Body of pancreas (tissue), 4 donors: ENCODE measurements at regions of chr21 and their contacts with region 1.

Region 1: DNA sequence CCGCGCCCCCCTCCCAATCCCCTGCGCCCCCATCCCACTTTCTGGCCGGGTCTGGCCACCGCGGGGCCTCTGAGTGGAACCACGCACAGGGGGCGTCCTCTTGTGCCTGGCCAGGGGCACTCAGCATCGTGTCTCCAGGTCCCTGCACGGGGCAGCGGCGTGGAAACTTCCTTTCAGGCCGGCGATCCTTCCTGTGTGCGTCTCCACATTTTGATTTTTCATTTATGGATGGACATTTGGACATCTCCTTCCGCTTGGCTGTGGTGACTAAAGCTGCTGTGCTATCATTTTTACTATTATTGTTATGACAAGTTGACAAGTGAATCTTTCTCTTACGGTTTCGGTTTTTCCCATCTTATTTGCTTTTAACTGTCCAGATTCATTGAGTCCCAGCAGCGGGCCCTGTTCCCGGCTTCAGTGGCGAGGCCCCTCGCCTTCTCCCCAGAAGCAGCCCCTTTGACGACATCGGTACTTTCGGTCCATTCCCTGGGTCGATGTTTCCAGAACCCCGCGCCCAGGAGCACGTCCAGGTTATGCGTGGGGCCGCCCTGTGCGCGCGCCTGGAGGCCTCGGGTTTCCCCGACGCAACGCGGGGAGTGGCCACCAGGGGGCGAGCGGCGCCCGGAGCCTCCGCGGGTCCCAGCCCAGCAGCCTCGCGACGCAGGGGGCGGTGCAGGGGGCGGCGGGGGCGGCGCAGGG is 12.4 kb upstream of the SLC19A1 start:
- DNase-seq: peak; percentile 76 to 88 (median 82)
- ATAC-seq: peak; percentile 73
- H3K4me3 ChIP-seq: peak overlapping the region; percentile 20 to 36
- H3K27ac ChIP-seq: peak overlapping the region; percentile 48 to 72 (median 60)
- H3K4me1 ChIP-seq: peaks cover 7% of the 10 kb centered on the region
- H3K27me3 ChIP-seq: no peaks in the 10 kb centered on the region
- CTCF ChIP-seq: peak; percentile 72 to 92 (median 83)
- POLR2A ChIP-seq: peak in 1 of 3 donors; percentile 29

Region 2: GRCh38 chr21:45596704-45597318 is 42.2 kb after region 1 on chr21:
- intact Hi-C with region 1: loop called (anchors 5 kb)
- DNase-seq: peak; percentile 73 to 85 (median 80)
- ATAC-seq: peak; percentile 85
- H3K4me3 ChIP-seq: no peak overlapping the region
- H3K27ac ChIP-seq: no peak overlapping the region
- H3K4me1 ChIP-seq: peaks cover 4% of the 10 kb centered on the region
- H3K27me3 ChIP-seq: no peaks in the 10 kb centered on the region
- CTCF ChIP-seq: peak; percentile 58 to 92 (median 86)
- POLR2A ChIP-seq: no peak

Region 3: DNA sequence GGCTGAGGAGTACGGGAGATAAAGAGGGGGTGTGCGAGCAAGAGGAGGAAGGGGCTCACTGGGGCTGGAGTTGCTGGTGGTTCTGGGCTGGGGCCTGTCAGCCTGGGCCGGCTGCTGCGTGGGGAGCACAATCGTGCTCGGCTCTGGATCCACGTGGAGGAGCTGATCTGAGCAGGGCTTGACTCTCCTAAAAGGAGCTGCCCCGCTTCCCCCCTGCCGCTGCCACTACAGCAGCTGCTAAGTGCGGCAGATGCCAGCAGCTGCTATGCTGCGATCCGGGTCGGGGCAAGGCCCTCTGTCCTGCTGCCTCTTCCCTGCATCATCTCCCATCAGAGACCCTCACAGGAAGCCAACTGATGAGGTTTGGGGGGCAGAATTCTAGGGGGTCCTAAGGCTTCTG is 254.8 kb after region 1 on chr21:
- intact Hi-C with region 1: no loop called
- DNase-seq: no peak
- ATAC-seq: no peak
- H3K4me3 ChIP-seq: no peak overlapping the region
- H3K27ac ChIP-seq: no peak overlapping the region
- H3K4me1 ChIP-seq: no peaks in the 10 kb centered on the region
- H3K27me3 ChIP-seq: no peaks in the 10 kb centered on the region
- CTCF ChIP-seq: no peak
- POLR2A ChIP-seq: no peak

Region 4: DNA sequence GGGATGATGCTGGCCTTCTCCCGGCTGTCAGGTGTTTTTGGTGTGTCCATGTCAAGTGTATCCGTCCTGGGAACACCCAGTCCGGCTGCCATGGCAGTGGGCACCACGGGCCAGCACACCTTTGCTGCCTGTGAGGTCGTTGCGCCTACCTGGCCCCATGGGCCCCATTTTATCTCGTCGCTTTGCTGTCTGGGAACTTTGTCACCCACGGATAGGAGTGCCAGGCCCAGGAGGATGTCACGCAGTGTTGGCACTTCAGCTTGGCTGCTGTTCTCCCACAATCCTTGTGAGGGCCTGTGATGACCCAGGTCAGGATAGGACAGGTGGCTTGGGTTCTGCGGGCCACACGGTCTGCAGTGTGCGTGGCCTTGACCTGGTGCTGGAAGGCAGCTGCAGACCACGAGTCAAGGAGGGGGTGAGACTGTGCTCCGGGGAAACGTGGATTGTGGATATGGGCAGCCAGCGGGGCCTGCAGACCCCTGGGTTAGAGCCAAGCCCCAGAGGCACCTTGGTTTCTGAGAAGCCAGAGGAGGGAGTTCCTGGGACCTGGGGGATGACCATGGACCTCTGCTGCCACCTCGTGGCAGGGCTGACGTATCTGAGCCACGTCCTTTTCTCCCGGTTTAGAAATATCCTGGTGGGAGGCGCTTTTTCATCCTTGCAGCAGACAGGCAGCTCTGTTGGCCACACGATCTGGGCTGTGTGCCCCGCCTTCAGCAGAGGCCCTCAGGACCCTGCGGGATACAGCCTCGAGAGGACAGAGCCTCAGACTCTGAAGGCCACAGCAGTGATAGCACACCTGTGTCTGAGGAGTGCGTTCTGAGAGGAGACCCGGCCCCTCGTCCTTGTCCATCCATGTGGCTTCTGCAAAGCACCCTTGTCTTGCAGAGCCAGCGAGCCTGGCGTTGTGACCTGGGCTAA is 265.8 kb after region 1 on chr21:
- intact Hi-C with region 1: loop called (anchors 10 kb)
- DNase-seq: peak; percentile 74 to 81 (median 77)
- ATAC-seq: peak; percentile 81
- H3K4me3 ChIP-seq: no peak overlapping the region
- H3K27ac ChIP-seq: no peak overlapping the region
- H3K4me1 ChIP-seq: no peaks in the 10 kb centered on the region
- H3K27me3 ChIP-seq: no peaks in the 10 kb centered on the region
- CTCF ChIP-seq: peak; percentile 63 to 87 (median 80)
- POLR2A ChIP-seq: no peak